ENCODE measurements at regions of chr6 and their contacts with region 1.

Region 1: DNA sequence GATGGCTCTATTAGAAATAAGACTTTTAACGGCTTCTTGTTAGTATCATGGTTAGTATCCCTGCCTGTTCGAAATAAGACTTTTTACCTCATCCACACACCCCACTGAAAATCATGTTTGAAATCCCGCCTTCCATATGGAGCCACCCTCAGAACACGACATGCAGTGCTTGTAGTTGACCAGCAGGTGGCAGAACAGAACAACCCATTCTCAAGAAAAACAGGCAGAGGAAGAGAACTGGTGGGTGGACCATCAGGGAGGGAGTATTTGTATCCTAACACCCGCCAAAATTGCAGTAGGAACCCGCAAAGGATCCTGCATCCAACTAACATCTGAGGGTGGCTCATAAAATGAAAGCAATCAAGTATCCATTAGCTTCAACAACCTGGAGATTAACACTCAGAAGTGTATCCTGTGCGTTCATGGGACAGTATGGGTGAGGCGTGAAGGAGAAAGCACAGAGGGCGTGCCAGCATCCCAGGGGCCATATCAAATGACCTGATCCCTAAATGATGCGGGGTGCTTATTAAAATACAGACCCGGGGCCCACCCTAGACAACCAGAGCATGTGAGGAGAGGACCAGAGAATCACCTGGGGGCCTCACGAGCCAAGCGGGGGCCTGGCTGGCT is 89.6 kb upstream of the NHSL1 start:
- DNase-seq: peak; percentile 83
- ATAC-seq: peak; percentile 67
- H3K4me3 ChIP-seq: no peak overlapping the region
- H3K27ac ChIP-seq: no peak overlapping the region
- H3K4me1 ChIP-seq: peaks cover 2% of the 10 kb centered on the region
- H3K27me3 ChIP-seq: no peaks in the 10 kb centered on the region
- CTCF ChIP-seq: peak; percentile 92
- POLR2A ChIP-seq: 0 out of 2 replicates have a peak, but pooled peaks have one; percentile 35
- RAD21 ChIP-seq: peak; percentile 90

Region 2: DNA sequence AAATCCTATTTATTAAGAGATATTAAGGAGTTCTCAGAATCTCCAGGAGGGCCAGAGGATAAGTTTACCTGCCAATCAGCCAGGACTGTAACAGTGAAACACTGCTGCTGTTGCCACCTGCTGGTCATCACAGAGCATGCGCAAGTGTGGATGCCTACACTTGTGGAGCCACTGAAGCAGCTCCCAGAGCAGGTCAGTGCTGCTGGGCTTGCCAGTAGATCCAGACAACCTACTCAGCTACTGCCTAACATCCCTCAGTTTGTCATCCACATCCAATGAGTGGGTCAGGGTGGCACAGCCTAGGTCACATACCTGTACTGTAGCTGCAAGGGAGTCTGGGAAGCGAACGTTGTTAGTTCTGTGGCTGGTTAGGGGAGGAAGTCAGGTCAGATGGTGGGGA is 71.3 kb before region 1 on chr6:
- CTCF ChIA-PET with region 1: interaction called, 4 read pairs
- POLR2A ChIA-PET with region 1: no interaction called
- dilution Hi-C with region 1: no loop called
- in situ Hi-C with region 1: no loop called
- intact Hi-C with region 1: loop called (anchors 2 kb)
- DNase-seq: peak; percentile 43
- ATAC-seq: peak; percentile 76
- H3K4me3 ChIP-seq: no peak overlapping the region
- H3K27ac ChIP-seq: no peak overlapping the region
- H3K4me1 ChIP-seq: no peaks in the 10 kb centered on the region
- H3K27me3 ChIP-seq: no peaks in the 10 kb centered on the region
- CTCF ChIP-seq: peak; percentile 55
- POLR2A ChIP-seq: no peak
- RAD21 ChIP-seq: peak; percentile 53

Region 3: DNA sequence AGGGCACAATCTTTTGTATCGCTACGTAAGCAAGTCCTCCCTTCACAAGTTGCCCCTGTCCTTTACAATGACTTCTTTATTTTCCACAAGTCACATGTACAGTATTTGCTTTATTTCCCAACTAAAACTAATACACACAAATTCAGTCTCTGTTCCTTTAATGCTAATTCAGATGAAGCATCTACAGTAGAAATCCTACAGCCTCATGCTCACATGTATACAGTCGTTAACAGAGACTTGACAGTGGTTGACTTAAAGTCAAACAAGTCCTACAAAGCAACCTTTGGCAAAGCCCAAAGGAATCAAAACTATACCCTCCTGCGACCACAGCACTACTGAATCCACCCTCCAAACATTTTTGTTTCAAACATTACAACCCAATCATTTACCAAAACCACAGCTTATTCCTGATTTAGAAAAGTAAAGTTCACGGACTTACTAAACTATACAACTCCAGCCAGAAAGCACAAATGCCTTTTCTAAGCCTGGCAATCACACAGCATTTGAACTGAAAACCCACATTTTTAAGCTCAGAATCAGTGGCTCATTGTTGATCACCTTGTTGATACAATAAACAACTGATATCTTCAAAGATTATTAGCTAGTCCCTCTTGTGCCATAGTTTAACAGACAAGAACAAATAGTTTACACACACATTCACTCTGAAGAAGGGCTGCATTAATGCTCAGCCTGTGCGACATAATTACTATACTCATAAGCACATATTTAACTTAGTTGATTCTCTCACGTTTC is 18.8 kb before region 1 on chr6:
- CTCF ChIA-PET with region 1: no interaction called
- POLR2A ChIA-PET with region 1: no interaction called
- dilution Hi-C with region 1: no loop called
- in situ Hi-C with region 1: no loop called
- intact Hi-C with region 1: no loop called
- DNase-seq: peak; percentile 48
- ATAC-seq: peak; percentile 24
- H3K4me3 ChIP-seq: peak overlapping the region; percentile 8; the same call in 1 of the 2 replicates
- H3K27ac ChIP-seq: peak overlapping the region; percentile 41; the same call in 1 of the 2 replicates
- H3K4me1 ChIP-seq: peaks cover 3% of the 10 kb centered on the region
- H3K27me3 ChIP-seq: no peaks in the 10 kb centered on the region
- CTCF ChIP-seq: no peak
- POLR2A ChIP-seq: no peak
- RAD21 ChIP-seq: no peak

Region 4: GRCh38 chr6:138692058-138692977 is 103.4 kb after region 1 on chr6:
- CTCF ChIA-PET with region 1: no interaction called
- POLR2A ChIA-PET with region 1: interaction called, 3 read pairs
- dilution Hi-C with region 1: no loop called
- in situ Hi-C with region 1: loop called (anchors 5 kb)
- intact Hi-C with region 1: loop called (anchors 1 kb)
- DNase-seq: peak; percentile 50
- ATAC-seq: peak; percentile 79
- H3K4me3 ChIP-seq: peak overlapping the region; percentile 88
- H3K27ac ChIP-seq: peak overlapping the region; percentile 65
- H3K4me1 ChIP-seq: no peaks in the 10 kb centered on the region
- H3K27me3 ChIP-seq: no peaks in the 10 kb centered on the region
- CTCF ChIP-seq: peak; percentile 75
- POLR2A ChIP-seq: no peak
- RAD21 ChIP-seq: peak; percentile 40

Region 5: GRCh38 chr6:138773177-138774091 is 184.5 kb after region 1 on chr6 and contains the start of gene CCDC28A:
- CTCF ChIA-PET with region 1: no interaction called
- POLR2A ChIA-PET with region 1: interaction called, 3 read pairs
- dilution Hi-C with region 1: no loop called
- in situ Hi-C with region 1: loop called (anchors 5 kb)
- intact Hi-C with region 1: no loop called
- DNase-seq: peak; percentile 94
- ATAC-seq: peak; percentile 95
- H3K4me3 ChIP-seq: peak within 1 kb of the TSS; percentile 85
- H3K27ac ChIP-seq: peak within 1 kb of the TSS; percentile 98
- H3K4me1 ChIP-seq: no peaks in the 10 kb centered on the region
- H3K27me3 ChIP-seq: no peaks in the 10 kb centered on the region
- CTCF ChIP-seq: no peak
- POLR2A ChIP-seq: peak; percentile 77
- RAD21 ChIP-seq: 0 out of 2 replicates have a peak, but pooled peaks have one; percentile 10
- total RNA-seq, gene CCDC28A: 6.8 and 8.9 TPM in 2 replicates

Region 6: GRCh38 chr6:138923561-138923960 is 334.6 kb after region 1 on chr6:
- CTCF ChIA-PET with region 1: no interaction called
- POLR2A ChIA-PET with region 1: no interaction called
- dilution Hi-C with region 1: no loop called
- in situ Hi-C with region 1: no loop called
- intact Hi-C with region 1: no loop called
- DNase-seq: no peak
- ATAC-seq: no peak
- H3K4me3 ChIP-seq: no peak overlapping the region
- H3K27ac ChIP-seq: no peak overlapping the region
- H3K4me1 ChIP-seq: no peaks in the 10 kb centered on the region
- H3K27me3 ChIP-seq: no peaks in the 10 kb centered on the region
- CTCF ChIP-seq: no peak
- POLR2A ChIP-seq: no peak
- RAD21 ChIP-seq: no peak